ENCODE measurements at regions of chr6 and their contacts with region 1.

Region 1: DNA sequence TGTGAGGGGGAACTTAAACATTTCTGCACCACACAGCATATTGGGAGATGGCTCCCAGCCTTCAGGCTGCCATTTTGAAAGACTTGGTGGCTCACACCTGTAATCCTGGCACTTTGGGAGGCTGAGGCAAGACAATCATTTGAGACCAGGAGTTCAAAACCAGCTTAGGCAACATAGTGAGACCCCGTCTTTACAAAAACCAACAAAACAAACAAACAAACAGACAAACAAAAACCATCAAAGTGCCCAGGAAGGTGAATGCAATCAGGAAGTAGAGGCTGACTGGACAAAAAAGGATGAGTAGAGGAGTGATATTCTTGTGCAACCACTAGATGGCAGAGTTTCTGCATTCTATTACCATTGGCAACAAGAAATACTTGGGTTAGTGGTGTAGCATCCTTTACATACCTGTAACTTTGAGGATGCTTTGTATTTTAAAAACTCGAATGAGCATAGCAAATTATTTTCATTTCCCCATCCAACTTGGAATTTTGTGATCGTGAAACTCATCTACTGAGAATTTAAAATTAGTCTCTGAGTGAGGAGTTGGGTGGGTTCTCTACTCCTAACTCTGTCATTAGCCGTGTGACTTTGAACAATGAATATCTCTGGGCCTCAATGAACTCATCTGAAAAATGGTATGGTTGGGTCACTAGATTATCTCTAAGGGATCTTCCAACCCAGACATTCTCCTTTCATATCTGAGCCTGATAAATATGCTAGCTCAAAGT is 84.4 kb downstream of the CRYBG1 start:
- DNase-seq: peak; percentile 65 to 71 (median 70)
- ATAC-seq: peak; percentile 93
- H3K4me3 ChIP-seq: no peak overlapping the region
- H3K27ac ChIP-seq: no peak overlapping the region
- H3K4me1 ChIP-seq: no peaks in the 10 kb centered on the region
- H3K27me3 ChIP-seq: peaks cover 0 to 6% of the 10 kb centered on the region in 2 experiments; a peak in 4 of 5 replicates
- CTCF ChIP-seq: peak; percentile 67 to 80 (median 75)
- EP300 ChIP-seq: no peak
- POLR2A ChIP-seq: no peak
- RAD21 ChIP-seq: peak; percentile 79 to 90

Region 2: DNA sequence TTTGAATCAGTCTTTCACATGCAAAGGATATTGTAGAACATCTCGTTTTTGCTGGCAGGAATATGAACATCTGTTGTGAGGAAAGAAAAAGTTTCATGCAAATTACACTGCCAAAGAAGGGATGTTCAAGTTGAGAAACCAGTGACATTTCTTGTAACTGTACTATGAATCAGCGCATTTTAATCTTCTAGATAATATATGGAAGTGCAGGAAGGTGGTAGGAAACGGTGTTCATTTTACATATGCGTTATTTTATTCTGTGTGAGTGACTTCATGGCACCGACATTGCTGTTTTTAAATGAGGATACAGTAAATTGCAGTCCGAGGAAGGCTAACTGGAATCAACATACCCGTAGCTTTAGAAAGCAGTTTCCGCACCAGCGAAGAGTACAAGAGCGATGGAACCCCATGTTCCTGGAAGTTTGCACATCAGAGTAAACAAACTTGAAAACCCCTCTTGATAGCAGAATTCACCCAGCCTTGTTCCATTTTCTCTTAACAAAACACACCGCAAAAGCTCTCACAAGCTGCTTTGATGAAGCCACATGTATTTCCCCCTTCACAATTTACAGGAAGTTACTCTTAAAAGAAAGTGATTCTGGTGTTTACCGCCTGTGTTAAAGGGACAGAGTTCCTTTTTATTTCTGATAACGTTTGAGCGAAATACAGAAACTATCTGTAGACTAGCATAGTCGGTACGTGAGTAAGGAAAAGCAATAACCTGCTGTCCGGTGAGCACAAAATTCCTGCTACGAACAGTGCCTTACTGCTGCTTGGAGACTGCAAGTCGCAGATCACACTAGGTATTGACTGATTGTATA is 347.3 kb before region 1 on chr6:
- CTCF ChIA-PET with region 1: no interaction called
- POLR2A ChIA-PET with region 1: no interaction called
- in situ Hi-C with region 1: no loop called
- intact Hi-C with region 1: loop called (anchors 10 kb)
- DNase-seq: peak in 2 of 4 experiments; percentile 20 to 56
- ATAC-seq: peak; percentile 68
- H3K4me3 ChIP-seq: peak overlapping the region; percentile 31
- H3K27ac ChIP-seq: peak overlapping the region; percentile 81
- H3K4me1 ChIP-seq: peaks cover 10 to 25% of the 10 kb centered on the region in 2 experiments; a peak in 4 of 5 replicates
- H3K27me3 ChIP-seq: no peaks in the 10 kb centered on the region
- CTCF ChIP-seq: no peak
- EP300 ChIP-seq: peak; percentile 44; the same call in 1 of the 2 replicates
- POLR2A ChIP-seq: peak; percentile 54
- RAD21 ChIP-seq: no peak

Region 3: GRCh38 chr6:106339334-106340029 is 105.5 kb before region 1 on chr6:
- CTCF ChIA-PET with region 1: interaction called, 4 read pairs
- POLR2A ChIA-PET with region 1: no interaction called
- in situ Hi-C with region 1: loop called (anchors 5 kb)
- intact Hi-C with region 1: loop called (anchors 1 kb)
- DNase-seq: peak; percentile 58 to 82 (median 67)
- ATAC-seq: peak; percentile 98
- H3K4me3 ChIP-seq: no peak overlapping the region
- H3K27ac ChIP-seq: no peak overlapping the region
- H3K4me1 ChIP-seq: no peaks in the 10 kb centered on the region; a peak in 1 of 5 replicates
- H3K27me3 ChIP-seq: peaks cover 0 to 5% of the 10 kb centered on the region in 2 experiments; a peak in 2 of 5 replicates
- CTCF ChIP-seq: peak; percentile 73 to 84 (median 81)
- EP300 ChIP-seq: no peak
- POLR2A ChIP-seq: no peak
- RAD21 ChIP-seq: peak; percentile 35 to 71; a peak in 3 of 4 replicates

Region 4: GRCh38 chr6:106556368-106556960 is 111.5 kb after region 1 on chr6:
- CTCF ChIA-PET with region 1: interaction called, 20 read pairs
- POLR2A ChIA-PET with region 1: no interaction called
- in situ Hi-C with region 1: no loop called
- intact Hi-C with region 1: no loop called
- DNase-seq: no peak
- ATAC-seq: no peak
- H3K4me3 ChIP-seq: no peak overlapping the region
- H3K27ac ChIP-seq: no peak overlapping the region
- H3K4me1 ChIP-seq: no peaks in the 10 kb centered on the region
- H3K27me3 ChIP-seq: peaks cover 9 to 19% of the 10 kb centered on the region in 2 experiments; a peak in 3 of 5 replicates
- CTCF ChIP-seq: peak in 1 of 3 experiments; percentile 56; a peak in 2 of 6 replicates
- EP300 ChIP-seq: no peak
- POLR2A ChIP-seq: no peak
- RAD21 ChIP-seq: peak; percentile 39 to 66; a peak in 3 of 4 replicates

Region 5: GRCh38 chr6:106568530-106568929 is 123.6 kb after region 1 on chr6:
- CTCF ChIA-PET with region 1: interaction called, 61 read pairs
- POLR2A ChIA-PET with region 1: no interaction called
- in situ Hi-C with region 1: loop called (anchors 5 kb)
- intact Hi-C with region 1: loop called (anchors 1 kb)
- DNase-seq: no peak
- ATAC-seq: no peak
- H3K4me3 ChIP-seq: no peak overlapping the region
- H3K27ac ChIP-seq: no peak overlapping the region
- H3K4me1 ChIP-seq: no peaks in the 10 kb centered on the region
- H3K27me3 ChIP-seq: no peaks in the 10 kb centered on the region
- CTCF ChIP-seq: no peak
- EP300 ChIP-seq: no peak
- POLR2A ChIP-seq: no peak
- RAD21 ChIP-seq: no peak

Region 6: DNA sequence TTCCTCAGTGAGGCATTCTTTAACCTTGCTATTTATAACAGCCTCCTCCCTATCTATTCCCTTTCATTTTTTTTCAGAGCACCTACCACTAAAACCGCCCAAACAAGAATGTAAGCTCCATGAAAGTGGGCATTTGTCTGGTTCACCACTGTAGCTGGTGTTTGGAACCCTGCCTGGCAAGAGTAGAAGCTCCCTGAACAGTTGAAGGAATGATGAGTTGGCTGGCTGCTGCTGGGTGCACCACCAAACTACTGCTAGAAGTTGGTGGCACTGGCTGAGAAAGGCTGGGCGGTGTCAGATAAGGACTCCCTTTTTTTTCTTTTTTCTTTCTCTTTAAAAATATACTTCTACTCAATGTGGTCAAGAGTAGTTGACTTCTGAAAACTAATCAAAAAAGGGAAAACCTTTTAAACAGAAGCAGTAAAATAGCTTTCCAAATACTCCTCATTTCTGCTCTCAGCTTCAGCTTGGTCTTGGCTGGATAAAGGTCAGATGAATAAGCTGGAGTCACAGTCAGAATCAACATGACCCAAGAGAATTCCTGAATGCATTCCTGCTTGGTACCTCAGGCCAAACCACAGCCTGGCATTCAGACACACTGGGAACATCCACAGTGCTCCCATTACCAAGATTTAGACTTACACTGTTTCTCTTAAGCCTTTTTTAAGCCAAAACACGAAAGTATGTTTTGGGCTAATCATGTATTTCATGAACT is 146.3 kb after region 1 on chr6:
- CTCF ChIA-PET with region 1: no interaction called
- POLR2A ChIA-PET with region 1: no interaction called
- in situ Hi-C with region 1: no loop called
- intact Hi-C with region 1: no loop called
- DNase-seq: no peak
- ATAC-seq: no peak
- H3K4me3 ChIP-seq: no peak overlapping the region
- H3K27ac ChIP-seq: no peak overlapping the region
- H3K4me1 ChIP-seq: no peaks in the 10 kb centered on the region
- H3K27me3 ChIP-seq: no peaks in the 10 kb centered on the region
- CTCF ChIP-seq: no peak
- EP300 ChIP-seq: no peak
- POLR2A ChIP-seq: no peak
- RAD21 ChIP-seq: no peak

Region 7: GRCh38 chr6:106997390-106998158 is 552.6 kb after region 1 on chr6:
- CTCF ChIA-PET with region 1: interaction called, 16 read pairs
- POLR2A ChIA-PET with region 1: no interaction called
- in situ Hi-C with region 1: no loop called
- intact Hi-C with region 1: loop called (anchors 5 kb)
- DNase-seq: peak; percentile 66 to 77 (median 74)
- ATAC-seq: peak; percentile 96
- H3K4me3 ChIP-seq: no peak overlapping the region
- H3K27ac ChIP-seq: no peak overlapping the region
- H3K4me1 ChIP-seq: peaks cover 3 to 4% of the 10 kb centered on the region in 2 experiments; a peak in 2 of 5 replicates
- H3K27me3 ChIP-seq: no peaks in the 10 kb centered on the region; a peak in 1 of 5 replicates
- CTCF ChIP-seq: peak; percentile 87 to 95 (median 92)
- EP300 ChIP-seq: no peak
- POLR2A ChIP-seq: no peak
- RAD21 ChIP-seq: peak; percentile 72 to 90